GM18951 (cell line): ENCODE measurements at regions of chr15 and their contacts with region 1.

Region 1: GRCh38 chr15:69058830-69059556 is 44.5 kb downstream of the NOX5 start:
- POLR2A ChIP-seq: no peak

Region 2: DNA sequence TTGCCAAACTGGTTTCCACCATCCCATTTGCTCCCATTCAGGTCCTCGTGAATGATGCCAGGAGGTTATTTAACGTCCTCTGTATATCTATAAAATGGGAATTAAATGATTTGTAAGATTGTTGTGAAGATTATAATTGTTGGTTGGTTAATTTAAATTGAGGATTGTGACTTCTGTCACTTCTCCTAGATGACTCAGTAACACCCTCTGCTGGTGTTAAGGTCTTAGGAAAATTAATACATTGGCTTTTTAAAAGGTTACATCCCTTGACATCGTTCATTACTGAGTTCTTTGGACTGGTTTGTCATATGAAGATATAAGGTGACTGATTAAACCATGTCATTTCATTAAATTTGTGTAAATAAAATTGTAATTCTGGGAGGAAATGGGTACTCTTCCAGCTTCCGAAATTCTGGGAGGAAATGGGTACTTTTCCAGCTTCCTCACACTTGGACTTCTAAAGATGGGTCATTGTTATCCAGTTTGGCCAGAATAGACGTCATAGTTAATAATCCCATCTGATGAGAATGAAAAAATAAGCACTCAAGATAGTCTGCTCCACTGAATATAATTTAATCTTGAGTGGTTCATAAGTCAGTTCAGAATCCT is 206.5 kb after region 1 on chr15:
- in situ Hi-C with region 1: loop called (anchors 25 kb)
- POLR2A ChIP-seq: no peak

Region 3: GRCh38 chr15:69394556-69395282 is 335.7 kb after region 1 on chr15:
- in situ Hi-C with region 1: loop called (anchors 25 kb)
- POLR2A ChIP-seq: no peak